ENCODE measurements at regions of chr17 and their contacts with region 1.

Region 1: DNA sequence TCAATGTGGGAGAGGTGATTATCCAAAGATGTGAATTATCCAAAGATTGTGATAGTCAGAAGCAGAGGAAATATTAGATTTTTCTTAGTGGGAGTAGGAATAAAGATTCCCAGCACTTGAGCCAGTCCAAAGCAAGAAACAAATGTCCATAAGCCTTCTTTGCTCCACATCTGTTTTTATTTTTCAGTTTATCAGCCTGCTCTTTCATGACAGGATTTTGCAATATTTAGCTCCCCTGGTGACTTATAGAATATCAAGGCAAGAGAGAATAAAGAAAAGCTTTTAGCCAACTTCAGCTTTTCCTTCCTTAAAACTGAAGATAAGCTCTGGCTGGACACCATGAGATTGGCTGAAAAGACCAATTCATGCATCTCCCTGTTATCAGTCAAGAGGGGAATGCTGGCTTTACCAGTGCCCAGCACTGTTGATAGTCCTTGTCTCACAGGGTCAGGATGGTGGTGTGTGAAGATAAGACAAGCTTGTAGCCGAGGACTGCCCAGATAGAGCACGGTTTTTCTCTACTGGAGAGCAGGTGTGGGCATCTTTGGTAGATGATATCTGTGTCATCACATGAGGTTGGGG is 706.5 kb downstream of the KCNJ2 start:
- DNase-seq: no peak
- ATAC-seq: no peak
- H3K4me3 ChIP-seq: no peak overlapping the region
- H3K4me3 Mint-ChIP-seq: no peak overlapping the region
- H3K27ac ChIP-seq: no peak overlapping the region
- H3K27ac Mint-ChIP-seq: no peak overlapping the region
- H3K4me1 ChIP-seq: no peaks in the 10 kb centered on the region
- H3K4me1 Mint-ChIP-seq: no peaks in the 10 kb centered on the region
- H3K27me3 ChIP-seq: no peaks in the 10 kb centered on the region
- H3K27me3 Mint-ChIP-seq: no peaks in the 10 kb centered on the region
- CTCF ChIP-seq: no peak

Region 2: DNA sequence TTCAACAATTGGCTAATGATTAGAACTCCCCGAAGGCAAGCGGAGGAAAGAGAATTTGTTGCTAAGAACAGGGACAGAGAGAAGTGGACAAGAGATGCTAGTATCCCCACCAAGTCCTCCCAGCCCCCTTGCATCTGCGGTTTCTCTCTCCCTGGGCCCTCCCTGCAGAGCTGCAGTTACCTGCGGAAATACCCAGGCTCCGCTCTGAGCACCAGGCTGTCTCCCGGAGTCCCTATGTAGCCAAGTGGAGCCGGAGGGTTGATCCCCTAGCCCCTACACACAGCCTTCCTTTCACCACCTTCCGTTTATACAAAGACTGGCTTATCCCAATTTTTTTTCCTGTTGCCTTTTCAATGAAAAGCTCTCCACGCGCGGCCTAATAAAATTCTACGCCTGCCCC is 127.9 kb after region 1 on chr17:
- CTCF ChIA-PET with region 1: no interaction called
- POLR2A ChIA-PET with region 1: no interaction called
- intact Hi-C with region 1: loop called in 1 of 2 experiments (anchors 5 kb)
- DNase-seq: no peak
- ATAC-seq: no peak
- H3K4me3 ChIP-seq: no peak overlapping the region
- H3K4me3 Mint-ChIP-seq: no peak overlapping the region
- H3K27ac ChIP-seq: no peak overlapping the region
- H3K27ac Mint-ChIP-seq: no peak overlapping the region
- H3K4me1 ChIP-seq: no peaks in the 10 kb centered on the region
- H3K4me1 Mint-ChIP-seq: no peaks in the 10 kb centered on the region
- H3K27me3 ChIP-seq: no peaks in the 10 kb centered on the region
- H3K27me3 Mint-ChIP-seq: no peaks in the 10 kb centered on the region
- CTCF ChIP-seq: no peak